B cell (primary cell): ENCODE measurements at regions of chr1 and their contacts with region 1.

Region 1: DNA sequence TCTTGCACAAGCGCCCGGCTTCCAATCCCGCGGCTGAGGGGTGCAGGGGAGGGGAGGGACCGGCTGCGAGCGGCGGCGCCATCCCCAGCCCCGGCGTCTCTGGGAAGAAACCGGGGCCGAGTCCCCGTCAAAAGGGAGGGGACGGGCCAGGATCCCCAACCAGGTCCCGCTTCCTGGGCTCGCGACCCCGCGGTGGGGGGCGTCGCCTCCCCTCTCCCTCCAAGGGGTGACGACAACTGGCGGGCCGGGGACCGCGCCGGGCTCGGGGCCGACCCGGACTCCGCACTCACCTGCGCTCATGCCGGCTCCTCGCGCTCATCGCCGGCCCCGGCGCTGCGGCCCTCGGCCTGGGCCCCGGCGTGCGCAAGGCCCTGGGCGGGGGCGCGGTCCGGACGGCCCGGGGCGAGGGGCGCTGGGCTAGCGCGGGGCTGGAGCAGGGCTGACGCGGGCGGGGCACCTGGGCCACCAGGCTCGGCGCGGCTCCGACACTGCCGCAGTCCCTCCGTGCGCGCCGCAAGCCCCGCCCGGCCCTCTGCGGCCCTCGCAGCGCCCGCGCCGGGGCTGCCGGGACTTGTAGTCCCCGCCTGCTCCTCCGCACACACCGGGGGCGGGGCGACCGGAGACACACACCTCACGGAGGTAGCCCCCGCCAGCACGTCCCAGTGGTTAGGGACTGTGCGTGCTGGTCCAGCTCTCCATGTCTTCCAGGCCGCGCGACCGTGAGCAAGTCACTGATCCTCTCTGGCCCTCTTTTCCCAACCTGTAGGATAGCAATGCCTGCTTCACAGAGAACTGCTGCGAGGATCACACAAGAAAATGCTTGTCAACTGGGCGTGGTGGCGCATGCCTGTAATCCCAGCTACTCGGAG is at the start of gene ATP13A2:
- DNase-seq: peak; percentile 88
- ATAC-seq: peak; percentile 99
- H3K4me3 ChIP-seq: peak within 1 kb of the TSS; percentile 21 to 83 (median 70)
- H3K4me3 Mint-ChIP-seq: peak within 1 kb of the TSS; percentile 88
- H3K27ac ChIP-seq: peak within 1 kb of the TSS in 1 of 2 donors; percentile 35
- H3K27ac Mint-ChIP-seq: peak within 1 kb of the TSS; percentile 72
- H3K4me1 ChIP-seq: peaks cover 22 to 39% of the 10 kb centered on the region in 2 donors
- H3K4me1 Mint-ChIP-seq: peaks cover 24% of the 10 kb centered on the region
- H3K27me3 ChIP-seq: no peaks in the 10 kb centered on the region
- H3K27me3 Mint-ChIP-seq: no peaks in the 10 kb centered on the region
- CTCF ChIP-seq: no peak
- total RNA-seq, gene ATP13A2: 39.4 and 41.6 TPM in 2 replicates

Region 2: GRCh38 chr1:16913833-16914662 is 97.6 kb before region 1 on chr1:
- CTCF ChIA-PET with region 1: no interaction called
- POLR2A ChIA-PET with region 1: no interaction called
- intact Hi-C with region 1: loop called (anchors 2 kb)
- DNase-seq: peak; percentile 96
- ATAC-seq: peak; percentile 97
- H3K4me3 ChIP-seq: peak overlapping the region in 4 of 5 experiments; percentile 65 to 83 (median 72)
- H3K4me3 Mint-ChIP-seq: peak overlapping the region; percentile 91
- H3K27ac ChIP-seq: peak overlapping the region; percentile 62 to 71
- H3K27ac Mint-ChIP-seq: peak overlapping the region; percentile 84
- H3K4me1 ChIP-seq: peaks cover 25 to 27% of the 10 kb centered on the region in 2 donors
- H3K4me1 Mint-ChIP-seq: peaks cover 26% of the 10 kb centered on the region
- H3K27me3 ChIP-seq: no peaks in the 10 kb centered on the region
- H3K27me3 Mint-ChIP-seq: no peaks in the 10 kb centered on the region
- CTCF ChIP-seq: no peak

Region 3: DNA sequence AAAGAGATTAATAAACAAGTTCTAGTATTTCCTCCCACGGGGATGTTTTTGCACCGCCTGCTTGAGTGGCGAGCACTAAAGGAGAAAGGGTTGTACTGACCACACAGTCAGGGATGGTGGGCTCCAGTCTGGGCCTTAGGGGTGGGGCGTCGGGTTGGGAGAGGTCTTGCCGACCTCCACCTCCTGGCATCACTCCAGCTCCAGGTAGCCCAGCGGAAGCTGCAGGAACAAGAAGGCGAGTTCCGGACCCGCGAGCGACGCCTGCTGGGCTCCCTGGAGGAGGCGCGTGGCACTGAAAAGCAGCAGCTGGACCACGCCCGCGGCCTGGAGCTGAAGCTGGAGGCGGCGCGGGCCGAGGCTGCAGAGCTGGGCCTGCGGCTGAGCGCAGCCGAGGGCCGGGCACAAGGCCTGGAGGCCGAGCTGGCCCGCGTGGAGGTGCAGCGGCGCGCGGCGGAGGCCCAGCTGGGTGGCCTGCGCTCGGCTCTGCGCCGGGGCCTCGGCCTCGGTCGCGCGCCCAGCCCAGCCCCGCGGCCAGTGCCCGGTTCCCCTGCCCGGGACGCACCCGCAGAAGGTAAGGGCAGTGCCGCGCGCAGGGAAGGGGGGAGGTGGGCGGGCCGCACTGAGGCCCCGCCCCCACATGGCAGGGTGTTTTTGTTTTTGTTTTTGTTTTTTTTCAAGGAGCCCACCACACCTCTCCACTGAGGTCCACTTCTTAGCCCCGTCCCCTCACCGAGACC is 50.9 kb before region 1 on chr1:
- CTCF ChIA-PET with region 1: interaction called, 5 read pairs
- POLR2A ChIA-PET with region 1: no interaction called
- intact Hi-C with region 1: loop called (anchors 2 kb)
- DNase-seq: peak; percentile 79
- ATAC-seq: peak; percentile 92
- H3K4me3 ChIP-seq: peak overlapping the region in 4 of 5 experiments; percentile 37 to 55 (median 50)
- H3K4me3 Mint-ChIP-seq: peak overlapping the region; percentile 91
- H3K27ac ChIP-seq: peak overlapping the region in 1 of 2 donors; percentile 26
- H3K27ac Mint-ChIP-seq: peak overlapping the region; percentile 76
- H3K4me1 ChIP-seq: peaks cover 4 to 10% of the 10 kb centered on the region in 2 donors
- H3K4me1 Mint-ChIP-seq: peaks cover 9% of the 10 kb centered on the region
- H3K27me3 ChIP-seq: no peaks in the 10 kb centered on the region
- H3K27me3 Mint-ChIP-seq: no peaks in the 10 kb centered on the region
- CTCF ChIP-seq: peak; percentile 75